ENCODE measurements at regions of chr14 and their contacts with region 1.

Region 1: GRCh38 chr14:34714320-34715126 is at the start of gene CFL2:
- DNase-seq: peak; percentile 86 to 96 (median 92)
- H3K4me3 ChIP-seq: peak within 1 kb of the TSS; percentile 63 to 98 (median 86)
- H3K27ac ChIP-seq: peak within 1 kb of the TSS; percentile 80 to 99 (median 98)
- H3K27me3 ChIP-seq: no peaks in the 10 kb centered on the region
- CTCF ChIP-seq: peak in 13 of 56 donors; percentile 3 to 40 (median 20)
- total RNA-seq, gene CFL2: 50.4 to 286 (median 109) TPM

Region 2: GRCh38 chr14:34554540-34555333 is 159.8 kb before region 1 on chr14:
- intact Hi-C with region 1: loop called in 1 of 2 experiments (anchors 5 kb)
- DNase-seq: peak in 1 of 10 donors; percentile 13
- H3K4me3 ChIP-seq: peak overlapping the region in 5 of 59 donors; percentile 16 to 24 (median 20)
- H3K27ac ChIP-seq: peak overlapping the region in 49 of 59 donors; percentile 0 to 79 (median 54)
- H3K27me3 ChIP-seq: no peaks in the 10 kb centered on the region
- CTCF ChIP-seq: no peak

Region 3: GRCh38 chr14:34568803-34569202 is 145.7 kb before region 1 on chr14:
- intact Hi-C with region 1: no loop called
- DNase-seq: peak in 2 of 10 donors; percentile 21 to 43
- H3K4me3 ChIP-seq: no peak overlapping the region
- H3K27ac ChIP-seq: peak overlapping the region in 2 of 59 donors; percentile 18 to 24
- H3K27me3 ChIP-seq: no peaks in the 10 kb centered on the region
- CTCF ChIP-seq: no peak

Region 4: GRCh38 chr14:34678306-34678705 is 36.2 kb before region 1 on chr14:
- intact Hi-C with region 1: loop called (anchors 1 to 2 kb)
- DNase-seq: peak in 1 of 10 donors; percentile 54
- H3K4me3 ChIP-seq: peak overlapping the region in 41 of 59 donors; percentile 4 to 54 (median 30)
- H3K27ac ChIP-seq: peak overlapping the region; percentile 41 to 99 (median 93)
- H3K27me3 ChIP-seq: peaks cover 0 to 2% (median 0%) of the 10 kb centered on the region in 45 donors
- CTCF ChIP-seq: peak in 1 of 56 donors; percentile 17

Region 5: GRCh38 chr14:34688470-34689206 is 25.9 kb before region 1 on chr14:
- intact Hi-C with region 1: no loop called
- DNase-seq: no peak
- H3K4me3 ChIP-seq: no peak overlapping the region
- H3K27ac ChIP-seq: peak overlapping the region in 5 of 59 donors; percentile 2 to 49 (median 19)
- H3K27me3 ChIP-seq: no peaks in the 10 kb centered on the region
- CTCF ChIP-seq: no peak

Region 6: GRCh38 chr14:34875031-34875922 is 160.8 kb after region 1 on chr14 and contains the start of gene BAZ1A:
- intact Hi-C with region 1: loop called in 1 of 2 experiments (anchors 2 kb)
- DNase-seq: peak in 4 of 10 donors; percentile 4 to 59 (median 22)
- H3K4me3 ChIP-seq: peak within 1 kb of the TSS; percentile 61 to 93 (median 84)
- H3K27ac ChIP-seq: peak within 1 kb of the TSS; percentile 73 to 99 (median 94)
- H3K27me3 ChIP-seq: no peaks in the 10 kb centered on the region
- CTCF ChIP-seq: peak in 23 of 56 donors; percentile 7 to 45 (median 19)
- total RNA-seq, gene BAZ1A: 3.8 to 20.1 (median 9.0) TPM

Measured in dorsolateral prefrontal cortex (tissue), 120 donors.